ENCODE measurements at regions of chr6 and their contacts with region 1.

Region 1: DNA sequence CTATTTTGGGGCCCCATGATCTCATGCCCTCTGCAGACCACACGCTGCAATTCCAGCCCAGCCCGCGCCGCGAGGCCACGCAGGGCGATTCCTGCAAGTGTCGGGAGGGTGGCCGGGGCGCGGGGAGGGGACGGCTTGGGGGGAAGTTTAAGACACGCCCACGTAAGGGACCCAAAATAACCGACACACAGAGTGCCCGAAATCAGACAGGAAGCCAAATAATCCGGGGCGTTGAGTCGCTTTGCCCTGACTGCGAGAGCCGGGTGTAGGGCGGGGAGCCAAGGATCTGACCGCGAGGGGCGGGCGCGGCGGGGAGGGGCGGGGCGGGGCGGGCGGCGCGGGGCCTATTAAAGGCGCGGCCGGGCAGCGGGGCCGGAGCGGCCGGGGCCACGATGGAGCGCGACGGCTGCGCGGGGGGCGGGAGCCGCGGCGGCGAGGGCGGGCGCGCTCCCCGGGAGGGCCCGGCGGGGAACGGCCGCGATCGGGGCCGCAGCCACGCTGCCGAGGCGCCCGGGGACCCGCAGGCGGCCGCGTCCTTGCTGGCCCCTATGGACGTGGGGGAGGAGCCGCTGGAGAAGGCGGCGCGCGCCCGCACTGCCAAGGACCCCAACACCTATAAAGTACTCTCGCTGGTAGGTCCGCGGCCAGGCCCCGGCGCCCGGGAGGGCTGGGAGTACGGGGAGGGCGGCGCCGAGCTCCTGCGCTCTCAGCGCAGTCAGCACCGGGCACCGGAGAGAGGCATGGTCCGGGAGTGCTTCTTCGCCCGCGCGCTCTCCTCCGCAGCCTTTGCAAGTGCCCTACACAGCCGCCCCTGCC is at the start of gene ENPP1:
- DNase-seq: peak; percentile 89 to 93
- ATAC-seq: peak; percentile 92
- H3K4me3 ChIP-seq: peak within 1 kb of the TSS; percentile 79 to 99
- H3K27ac ChIP-seq: peak within 1 kb of the TSS; percentile 81 to 93
- H3K4me1 ChIP-seq: peaks cover 3 to 20% of the 10 kb centered on the region in 2 donors
- H3K27me3 ChIP-seq: no peaks in the 10 kb centered on the region
- total RNA-seq, gene ENPP1: 20.2 to 35.2 TPM

Region 2: DNA sequence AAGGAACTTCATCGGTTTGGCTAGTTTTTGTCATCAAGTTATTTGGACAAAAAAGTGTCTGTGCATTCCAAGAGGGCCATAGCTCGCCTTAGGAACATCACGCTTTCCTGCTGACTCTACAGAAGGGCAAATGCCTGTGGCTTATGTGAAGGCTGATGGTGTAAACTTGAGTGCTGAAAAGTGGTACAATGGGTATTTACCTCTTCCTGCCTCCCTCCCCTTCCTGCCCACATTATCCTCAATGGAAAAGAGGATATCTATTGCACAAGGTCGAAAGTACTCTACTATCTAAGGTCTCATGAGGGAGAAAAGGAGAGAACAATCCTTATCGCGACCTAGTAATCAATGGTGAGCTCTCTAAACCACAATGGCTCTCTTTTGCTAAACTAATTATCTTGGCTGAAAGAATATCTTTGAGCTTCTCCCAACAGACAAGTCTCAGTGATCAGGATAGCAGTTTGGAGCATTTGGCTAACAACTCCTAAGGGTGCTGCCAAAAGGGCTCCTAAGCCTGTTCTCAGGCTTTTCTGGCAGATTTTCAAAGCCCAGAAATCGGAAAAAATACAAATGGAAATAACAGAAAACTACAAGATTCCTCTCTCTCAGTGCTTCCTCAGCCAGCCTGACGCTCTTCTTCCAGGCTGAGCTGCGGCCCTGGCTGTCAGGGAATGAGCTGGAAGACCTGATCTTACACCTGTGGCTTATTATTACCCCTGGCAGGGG is 42.6 kb before region 1 on chr6:
- intact Hi-C with region 1: loop called in 1 of 2 experiments (anchors 5 kb)
- DNase-seq: no peak
- ATAC-seq: peak; percentile 51
- H3K4me3 ChIP-seq: no peak overlapping the region
- H3K27ac ChIP-seq: peak overlapping the region; percentile 46 to 89
- H3K4me1 ChIP-seq: peaks cover 1 to 6% of the 10 kb centered on the region in 2 donors
- H3K27me3 ChIP-seq: no peaks in the 10 kb centered on the region

Region 3: DNA sequence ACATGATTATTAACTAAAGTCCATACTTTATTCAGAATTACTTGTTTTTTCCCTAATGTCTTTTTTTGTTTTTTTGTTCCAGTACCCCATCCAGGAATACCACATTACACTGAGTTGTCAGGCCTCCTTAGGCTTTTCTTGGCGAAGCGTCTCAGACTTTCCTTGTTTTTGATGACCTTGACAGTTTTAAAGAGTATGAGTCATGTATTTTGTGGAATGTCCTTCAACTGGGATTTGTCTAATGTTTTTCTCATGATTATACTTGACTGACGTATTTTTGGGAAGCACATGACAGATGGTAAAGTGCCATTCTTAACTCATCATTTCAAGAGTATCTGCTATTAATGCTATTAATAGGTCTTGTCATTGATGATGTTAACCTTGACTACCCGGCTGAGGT is 23.5 kb after region 1 on chr6:
- intact Hi-C with region 1: loop called in 1 of 2 experiments (anchors 2 kb)
- DNase-seq: no peak
- ATAC-seq: peak; percentile 80
- H3K4me3 ChIP-seq: no peak overlapping the region
- H3K27ac ChIP-seq: no peak overlapping the region
- H3K4me1 ChIP-seq: no peaks in the 10 kb centered on the region
- H3K27me3 ChIP-seq: no peaks in the 10 kb centered on the region

Region 4: DNA sequence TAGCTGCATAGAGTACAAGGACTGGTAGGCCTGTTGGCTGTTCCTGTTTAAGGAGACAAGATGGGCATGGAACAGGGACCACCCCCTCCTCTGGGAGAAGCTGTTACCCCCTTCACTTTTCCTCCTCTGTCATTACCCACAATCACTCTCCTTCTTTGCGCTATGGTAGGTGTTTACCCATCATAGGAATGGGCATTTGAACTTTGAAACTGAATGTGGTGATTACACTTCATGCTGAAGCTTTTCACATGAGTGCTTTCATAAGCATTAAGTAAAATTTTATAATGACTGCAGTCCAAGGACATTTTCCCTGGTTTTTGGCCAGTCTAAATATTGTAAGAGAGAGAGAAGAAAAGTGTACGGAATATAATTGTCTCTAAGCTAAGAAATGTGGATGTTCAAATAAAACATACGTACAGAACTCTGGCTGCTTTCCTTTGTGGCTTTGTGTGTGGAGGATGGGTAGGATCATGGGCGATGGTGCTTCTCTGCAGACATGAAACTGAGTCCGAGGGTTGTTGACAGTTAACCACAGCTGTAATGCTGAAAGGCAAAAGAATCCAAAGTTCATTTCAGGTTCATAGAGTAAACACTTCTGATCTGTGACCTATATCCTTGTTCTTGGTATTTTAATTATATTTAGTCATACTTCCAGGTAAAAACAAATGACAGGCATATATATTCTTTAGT is 87.0 kb after region 1 on chr6:
- intact Hi-C with region 1: no loop called
- DNase-seq: no peak
- ATAC-seq: peak; percentile 33
- H3K4me3 ChIP-seq: no peak overlapping the region
- H3K27ac ChIP-seq: no peak overlapping the region
- H3K4me1 ChIP-seq: peaks cover 0 to 3% of the 10 kb centered on the region in 2 donors
- H3K27me3 ChIP-seq: no peaks in the 10 kb centered on the region

Measured in aorta (tissue), 5 donors.